Activated CD4-positive, alpha-beta memory T cell treated with anti-CD3 and anti-CD28 coated beads, Interleukin-2, amount 10 ng/mL, durations not matched to agents 7 days and 5 days (primary cell): ENCODE measurements at regions of chr10 and their contacts with region 1.

Region 1: DNA sequence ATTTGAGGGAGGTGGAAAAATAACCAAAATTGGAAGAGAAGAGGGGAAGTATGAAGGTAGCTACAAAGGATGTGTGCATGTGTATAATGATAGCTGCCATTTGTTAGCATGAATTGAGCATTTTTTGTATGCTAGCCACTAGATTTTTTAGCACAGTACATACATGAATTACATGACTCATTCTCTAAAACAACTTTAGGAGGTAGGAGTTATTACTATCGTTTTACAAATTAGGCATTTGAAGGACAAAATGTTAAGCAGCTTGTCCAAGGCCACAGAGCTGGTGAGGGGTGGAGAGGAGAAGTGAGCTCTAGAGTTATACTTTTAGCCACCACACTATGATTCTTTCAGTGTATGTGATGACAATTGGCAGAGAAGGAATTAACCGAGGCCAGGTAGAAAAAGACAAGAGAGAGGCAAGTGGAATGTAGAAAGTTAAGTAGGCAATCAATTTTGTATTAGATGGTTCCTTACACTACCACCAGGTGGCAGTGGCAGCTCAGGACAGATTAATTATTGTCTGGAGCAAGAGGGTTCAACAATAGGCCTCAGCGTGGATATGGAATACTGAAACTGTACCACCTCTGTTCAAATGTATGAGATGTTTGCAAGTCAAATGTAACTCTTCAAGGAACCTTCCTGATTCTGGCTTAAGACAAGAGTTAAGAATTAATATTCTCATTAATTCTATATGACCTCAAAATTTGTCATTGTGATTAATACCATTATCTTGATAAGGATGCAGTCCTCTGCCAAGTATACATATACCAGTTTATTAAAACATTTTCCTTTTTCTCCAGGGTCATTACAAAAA is 128.0 kb downstream of the MBL2 start:
- DNase-seq: peak; percentile 15
- H3K4me3 Mint-ChIP-seq: no peak overlapping the region
- H3K27ac Mint-ChIP-seq: no peak overlapping the region
- H3K4me1 Mint-ChIP-seq: no peaks in the 10 kb centered on the region
- H3K27me3 Mint-ChIP-seq: no peaks in the 10 kb centered on the region

Region 2: GRCh38 chr10:52486840-52487611 is 157.6 kb before region 1 on chr10:
- CTCF ChIA-PET with region 1: no interaction called
- POLR2A ChIA-PET with region 1: no interaction called
- DNase-seq: no peak
- H3K4me3 Mint-ChIP-seq: no peak overlapping the region
- H3K27ac Mint-ChIP-seq: no peak overlapping the region
- H3K4me1 Mint-ChIP-seq: no peaks in the 10 kb centered on the region
- H3K27me3 Mint-ChIP-seq: no peaks in the 10 kb centered on the region

Region 3: DNA sequence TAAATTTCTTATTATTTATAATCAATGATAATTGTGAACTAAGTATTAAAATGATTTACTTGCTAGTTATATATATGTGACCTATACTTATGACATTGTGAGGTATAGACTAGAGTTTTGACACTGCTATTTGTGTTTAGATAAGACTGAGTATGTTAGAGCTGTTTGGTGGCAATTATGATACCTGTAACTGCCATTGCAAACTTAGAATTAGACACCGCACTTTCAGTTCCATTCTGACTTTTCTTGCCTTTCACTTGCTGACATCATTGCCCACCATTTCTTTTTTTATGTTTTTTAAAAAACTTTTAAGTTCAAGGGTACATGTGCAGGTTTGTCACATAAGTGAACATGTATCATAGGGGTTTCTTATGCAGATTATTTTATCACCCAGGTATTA is 86.5 kb before region 1 on chr10:
- CTCF ChIA-PET with region 1: no interaction called
- POLR2A ChIA-PET with region 1: no interaction called
- DNase-seq: no peak
- H3K4me3 Mint-ChIP-seq: no peak overlapping the region
- H3K27ac Mint-ChIP-seq: no peak overlapping the region
- H3K4me1 Mint-ChIP-seq: no peaks in the 10 kb centered on the region
- H3K27me3 Mint-ChIP-seq: no peaks in the 10 kb centered on the region

Region 4: DNA sequence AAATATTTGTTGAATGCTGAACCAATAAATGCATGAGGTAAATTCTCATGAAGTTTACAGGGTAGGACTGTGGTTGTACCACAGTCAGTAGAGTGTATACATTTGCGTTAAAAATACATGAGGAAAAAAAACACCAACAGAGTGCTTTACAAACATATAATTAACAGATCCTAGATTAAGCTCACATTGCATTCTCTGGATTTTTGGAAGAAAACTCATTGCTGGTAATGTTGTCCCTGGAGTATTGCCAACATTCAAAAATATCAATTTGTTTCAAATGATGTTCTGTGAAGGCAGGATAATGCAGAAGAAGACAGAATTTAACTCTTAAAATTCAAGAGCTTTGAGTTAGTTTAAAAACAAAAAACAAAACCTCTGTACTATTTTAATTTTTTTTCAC is 32.5 kb after region 1 on chr10:
- CTCF ChIA-PET with region 1: interaction called, 10 read pairs
- POLR2A ChIA-PET with region 1: no interaction called
- DNase-seq: no peak
- H3K4me3 Mint-ChIP-seq: no peak overlapping the region
- H3K27ac Mint-ChIP-seq: no peak overlapping the region
- H3K4me1 Mint-ChIP-seq: no peaks in the 10 kb centered on the region
- H3K27me3 Mint-ChIP-seq: no peaks in the 10 kb centered on the region

Region 5: GRCh38 chr10:52696232-52696631 is 51.7 kb after region 1 on chr10:
- CTCF ChIA-PET with region 1: no interaction called
- POLR2A ChIA-PET with region 1: no interaction called
- DNase-seq: no peak
- H3K4me3 Mint-ChIP-seq: no peak overlapping the region
- H3K27ac Mint-ChIP-seq: no peak overlapping the region
- H3K4me1 Mint-ChIP-seq: no peaks in the 10 kb centered on the region
- H3K27me3 Mint-ChIP-seq: no peaks in the 10 kb centered on the region

Region 6: DNA sequence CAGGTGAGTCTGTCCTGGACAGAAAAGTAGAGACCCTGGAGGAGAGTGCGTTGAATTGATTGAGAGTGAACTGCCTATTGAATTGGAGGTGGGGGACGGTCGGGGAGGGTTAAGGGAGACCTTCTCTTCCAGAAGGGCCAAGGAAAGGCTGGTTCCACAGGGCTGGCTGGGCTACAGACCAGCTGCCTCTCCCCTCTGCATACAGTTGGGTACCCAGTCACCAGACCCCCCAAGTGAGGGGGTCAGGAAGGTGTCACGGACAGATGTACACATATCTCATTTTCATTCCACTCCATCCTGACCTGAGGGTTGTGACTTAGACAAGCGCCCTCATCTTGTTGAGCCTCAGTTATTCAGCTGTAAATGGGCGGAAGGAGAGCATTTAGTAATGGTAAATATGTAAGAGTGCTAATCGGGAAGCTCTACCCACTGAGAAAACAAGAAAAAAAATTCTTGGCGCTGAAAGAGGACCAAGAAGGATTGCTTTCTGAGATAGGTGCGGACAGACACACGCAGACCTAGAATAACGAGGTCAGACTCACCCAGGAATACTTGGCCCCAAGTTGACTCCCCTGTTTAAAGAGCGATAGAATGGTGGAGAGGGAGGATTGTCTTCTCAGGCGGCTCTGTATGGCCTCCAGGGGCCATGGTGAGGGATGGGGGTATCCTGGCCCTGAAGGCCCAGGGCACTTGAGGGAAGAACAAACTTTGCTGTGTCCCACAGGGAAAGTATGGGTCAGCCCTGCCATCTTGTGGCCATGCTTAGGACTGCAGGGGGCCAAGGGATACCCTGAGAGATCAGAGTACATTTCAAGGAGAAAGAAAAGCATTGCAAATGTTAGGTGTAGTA is 135.2 kb after region 1 on chr10:
- CTCF ChIA-PET with region 1: interaction called, 16 read pairs
- POLR2A ChIA-PET with region 1: no interaction called
- DNase-seq: peak; percentile 39
- H3K4me3 Mint-ChIP-seq: no peak overlapping the region
- H3K27ac Mint-ChIP-seq: no peak overlapping the region
- H3K4me1 Mint-ChIP-seq: no peaks in the 10 kb centered on the region
- H3K27me3 Mint-ChIP-seq: no peaks in the 10 kb centered on the region